PC-3 (cell line): ENCODE measurements at regions of chr18 and their contacts with region 1.

Region 1: GRCh38 chr18:48951448-48952286 is 902 bp upstream of the SMAD7 start:
- DNase-seq: peak; percentile 61
- ATAC-seq: peak; percentile 39
- H3K4me3 ChIP-seq: peak overlapping the region; percentile 73
- H3K27ac ChIP-seq: peak overlapping the region; percentile 74
- H3K4me1 ChIP-seq: peaks cover 13% of the 10 kb centered on the region
- H3K27me3 ChIP-seq: no peaks in the 10 kb centered on the region
- CTCF ChIP-seq: no peak

Region 2: GRCh38 chr18:48777026-48777743 is 174.5 kb before region 1 on chr18:
- CTCF ChIA-PET with region 1: no interaction called
- POLR2A ChIA-PET with region 1: no interaction called
- intact Hi-C with region 1: loop called (anchors 5 kb)
- DNase-seq: peak; percentile 30
- ATAC-seq: peak; percentile 87
- H3K4me3 ChIP-seq: no peak overlapping the region
- H3K27ac ChIP-seq: no peak overlapping the region
- H3K4me1 ChIP-seq: no peaks in the 10 kb centered on the region
- H3K27me3 ChIP-seq: no peaks in the 10 kb centered on the region
- CTCF ChIP-seq: peak; percentile 67

Region 3: DNA sequence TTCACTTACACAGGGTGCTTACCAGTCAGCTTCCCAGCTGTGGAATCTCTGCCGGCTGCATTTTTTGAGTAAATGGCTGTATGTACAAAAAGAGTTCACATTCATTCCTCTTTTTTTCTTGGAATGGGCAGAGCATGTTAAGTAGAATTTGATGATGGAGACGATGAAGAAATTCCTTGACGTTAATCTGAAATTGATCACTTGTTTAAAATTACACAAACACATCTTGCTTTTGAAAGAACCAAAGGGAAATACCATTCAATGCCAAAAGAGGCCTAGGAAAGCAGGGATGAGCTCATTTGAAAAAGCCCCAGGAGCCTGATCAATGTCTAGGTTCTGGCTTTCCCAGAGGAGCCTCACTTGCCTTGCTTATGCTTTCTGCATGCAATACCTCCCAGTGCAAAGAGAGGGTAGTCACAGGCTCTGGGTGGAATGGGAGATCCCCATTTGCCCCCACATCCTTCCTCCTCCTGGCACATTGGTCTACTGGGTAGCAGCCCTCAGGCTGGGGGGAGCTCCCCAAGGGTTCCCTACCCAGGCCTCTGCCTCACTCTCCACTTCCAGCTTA is 11.4 kb after region 1 on chr18:
- CTCF ChIA-PET with region 1: no interaction called
- POLR2A ChIA-PET with region 1: interaction called, 12 read pairs
- intact Hi-C with region 1: no loop called
- DNase-seq: no peak
- ATAC-seq: no peak
- H3K4me3 ChIP-seq: no peak overlapping the region
- H3K27ac ChIP-seq: no peak overlapping the region
- H3K4me1 ChIP-seq: no peaks in the 10 kb centered on the region
- H3K27me3 ChIP-seq: no peaks in the 10 kb centered on the region
- CTCF ChIP-seq: no peak

Region 4: GRCh38 chr18:49025767-49026500 is 74.3 kb after region 1 on chr18:
- CTCF ChIA-PET with region 1: no interaction called
- POLR2A ChIA-PET with region 1: interaction called, 18 read pairs
- intact Hi-C with region 1: no loop called
- DNase-seq: no peak
- ATAC-seq: no peak
- H3K4me3 ChIP-seq: no peak overlapping the region
- H3K27ac ChIP-seq: no peak overlapping the region
- H3K4me1 ChIP-seq: peaks cover 5% of the 10 kb centered on the region; the same call in 1 of the 2 replicates
- H3K27me3 ChIP-seq: no peaks in the 10 kb centered on the region
- CTCF ChIP-seq: no peak

Region 5: DNA sequence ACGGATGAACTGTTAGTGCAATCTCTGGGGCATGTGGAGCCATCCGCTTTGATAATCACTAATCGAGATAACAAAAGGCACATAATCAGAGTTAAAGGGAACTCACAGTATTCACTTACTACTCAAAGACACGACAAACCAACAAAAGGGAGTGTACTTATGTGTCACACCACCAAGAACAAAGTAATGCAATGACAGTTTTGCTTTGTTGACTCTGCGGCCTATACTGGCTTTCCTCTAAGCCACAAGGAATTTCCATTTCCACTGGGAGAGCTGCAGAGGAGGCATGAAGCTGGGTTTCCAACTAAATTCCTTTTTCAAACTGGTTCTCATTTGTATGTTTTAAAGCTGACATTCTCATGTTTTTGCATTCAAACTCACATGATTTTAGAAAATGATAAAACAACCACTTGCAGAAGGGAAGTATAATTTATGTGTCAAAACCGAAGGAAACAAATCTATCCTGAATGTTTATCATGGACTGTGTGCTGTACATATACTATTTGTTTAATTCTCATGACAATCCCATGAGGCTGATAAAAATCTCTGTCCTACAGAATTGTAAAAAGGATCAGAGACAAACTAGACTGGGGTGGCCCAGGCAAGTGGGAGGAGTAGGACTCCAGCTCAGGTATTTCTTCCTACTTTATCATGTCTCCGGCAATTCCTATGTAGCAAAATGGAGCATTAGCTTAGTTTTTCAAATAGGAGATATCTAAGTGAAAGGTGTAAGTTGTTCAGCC is 148.7 kb after region 1 on chr18:
- CTCF ChIA-PET with region 1: no interaction called
- POLR2A ChIA-PET with region 1: interaction called, 15 read pairs
- intact Hi-C with region 1: no loop called
- DNase-seq: peak; percentile 70
- ATAC-seq: peak; percentile 98
- H3K4me3 ChIP-seq: no peak overlapping the region
- H3K27ac ChIP-seq: peak overlapping the region; percentile 61
- H3K4me1 ChIP-seq: peaks cover 23% of the 10 kb centered on the region
- H3K27me3 ChIP-seq: no peaks in the 10 kb centered on the region
- CTCF ChIP-seq: no peak

Region 6: GRCh38 chr18:49178736-49179135 is 227.1 kb after region 1 on chr18:
- CTCF ChIA-PET with region 1: interaction called, 3 read pairs
- POLR2A ChIA-PET with region 1: no interaction called
- intact Hi-C with region 1: loop called (anchors 5 kb)
- DNase-seq: peak; percentile 12
- ATAC-seq: no peak
- H3K4me3 ChIP-seq: no peak overlapping the region
- H3K27ac ChIP-seq: no peak overlapping the region
- H3K4me1 ChIP-seq: peaks cover 19% of the 10 kb centered on the region
- H3K27me3 ChIP-seq: no peaks in the 10 kb centered on the region
- CTCF ChIP-seq: peak; percentile 64